Activated naive CD4-positive, alpha-beta T cell treated with anti-CD3 and anti-CD28 coated beads for 36 hours (primary cell): ENCODE measurements at regions of chr19 and their contacts with region 1.

Region 1: DNA sequence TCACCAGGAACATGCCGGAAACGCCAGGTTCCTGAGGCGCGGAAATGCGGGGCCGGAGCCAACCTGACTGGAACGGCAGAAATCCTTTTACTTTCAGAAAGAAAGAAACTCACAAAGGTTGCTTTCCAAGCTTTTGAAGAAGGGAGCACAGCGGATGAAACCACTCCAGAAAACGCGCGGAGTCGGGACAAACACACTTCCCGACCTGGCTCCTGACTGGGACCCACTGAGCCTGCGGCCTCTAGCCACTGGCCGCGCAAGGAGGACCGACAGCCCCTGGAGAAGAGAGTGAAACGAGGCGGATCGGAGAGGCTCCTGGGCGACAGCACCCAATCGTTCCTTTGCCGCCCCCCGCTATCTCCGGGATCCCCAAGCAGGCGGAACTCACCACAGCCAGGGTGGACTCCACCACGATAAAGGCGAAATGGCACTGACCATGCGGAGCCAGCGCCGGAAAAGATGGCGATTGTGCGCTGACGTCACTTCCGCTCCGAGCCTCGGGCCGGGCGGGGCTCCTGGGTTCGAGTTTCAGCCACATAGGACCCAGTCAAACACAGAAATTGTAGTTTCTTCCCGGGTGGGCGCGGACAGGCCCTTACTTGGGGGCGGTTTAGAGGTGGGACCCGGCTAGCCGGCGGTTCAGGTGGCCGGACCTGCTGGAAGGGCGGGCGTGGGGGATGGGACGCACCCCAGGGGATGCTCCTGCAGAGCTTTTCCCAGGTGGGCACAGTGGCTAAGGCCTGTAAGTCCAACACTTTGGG is at the start of gene ZNF121:
- DNase-seq: peak; percentile 88
- H3K4me3 Mint-ChIP-seq: peak within 1 kb of the TSS; percentile 91
- H3K27ac Mint-ChIP-seq: peak within 1 kb of the TSS; percentile 95
- H3K4me1 Mint-ChIP-seq: peaks cover 33% of the 10 kb centered on the region
- H3K27me3 Mint-ChIP-seq: peaks cover 2% of the 10 kb centered on the region
- total RNA-seq, gene ZNF121: 57.1 to 60.1 TPM

Region 2: DNA sequence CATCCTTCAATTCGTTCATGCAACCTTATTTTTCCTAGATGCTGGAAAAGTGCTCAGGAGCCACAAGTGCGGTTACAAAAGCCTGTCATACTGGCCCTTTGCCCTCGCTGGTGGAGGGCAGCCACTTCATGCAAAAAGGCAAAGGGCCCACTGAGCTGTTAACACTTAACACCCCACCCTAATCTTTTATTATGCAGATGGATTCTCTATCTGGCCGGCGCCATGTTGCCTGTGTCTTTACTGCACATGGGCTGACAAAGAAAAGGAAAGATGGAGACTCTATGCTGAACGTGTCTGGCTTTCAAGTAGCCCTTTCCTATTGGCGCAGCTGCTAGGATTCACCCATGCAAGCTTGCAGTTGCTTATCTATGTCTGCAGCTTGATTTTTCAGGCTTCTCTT is 394.7 kb before region 1 on chr19:
- CTCF ChIA-PET with region 1: no interaction called
- intact Hi-C with region 1: no loop called
- DNase-seq: no peak
- H3K4me3 Mint-ChIP-seq: no peak overlapping the region
- H3K27ac Mint-ChIP-seq: no peak overlapping the region
- H3K4me1 Mint-ChIP-seq: no peaks in the 10 kb centered on the region
- H3K27me3 Mint-ChIP-seq: peaks cover 15% of the 10 kb centered on the region

Region 3: GRCh38 chr19:9323919-9324583 is 260.2 kb before region 1 on chr19 and contains the start of gene ZNF559:
- CTCF ChIA-PET with region 1: no interaction called
- intact Hi-C with region 1: loop called (anchors 5 kb)
- DNase-seq: peak; percentile 97
- H3K4me3 Mint-ChIP-seq: peak within 1 kb of the TSS; percentile 90
- H3K27ac Mint-ChIP-seq: peak within 1 kb of the TSS; percentile 93
- H3K4me1 Mint-ChIP-seq: peaks cover 28% of the 10 kb centered on the region
- H3K27me3 Mint-ChIP-seq: no peaks in the 10 kb centered on the region
- total RNA-seq, gene ZNF559: 10.3 to 11.2 TPM

Region 4: GRCh38 chr19:9538183-9539058 is 45.8 kb before region 1 on chr19 and contains the start of gene ZNF426:
- CTCF ChIA-PET with region 1: no interaction called
- intact Hi-C with region 1: loop called (anchors 1 kb)
- DNase-seq: peak; percentile 95
- H3K4me3 Mint-ChIP-seq: peak within 1 kb of the TSS; percentile 98
- H3K27ac Mint-ChIP-seq: peak within 1 kb of the TSS; percentile 96
- H3K4me1 Mint-ChIP-seq: peaks cover 22% of the 10 kb centered on the region
- H3K27me3 Mint-ChIP-seq: no peaks in the 10 kb centered on the region
- total RNA-seq, gene ZNF426: 11.2 to 12.3 TPM

Region 5: DNA sequence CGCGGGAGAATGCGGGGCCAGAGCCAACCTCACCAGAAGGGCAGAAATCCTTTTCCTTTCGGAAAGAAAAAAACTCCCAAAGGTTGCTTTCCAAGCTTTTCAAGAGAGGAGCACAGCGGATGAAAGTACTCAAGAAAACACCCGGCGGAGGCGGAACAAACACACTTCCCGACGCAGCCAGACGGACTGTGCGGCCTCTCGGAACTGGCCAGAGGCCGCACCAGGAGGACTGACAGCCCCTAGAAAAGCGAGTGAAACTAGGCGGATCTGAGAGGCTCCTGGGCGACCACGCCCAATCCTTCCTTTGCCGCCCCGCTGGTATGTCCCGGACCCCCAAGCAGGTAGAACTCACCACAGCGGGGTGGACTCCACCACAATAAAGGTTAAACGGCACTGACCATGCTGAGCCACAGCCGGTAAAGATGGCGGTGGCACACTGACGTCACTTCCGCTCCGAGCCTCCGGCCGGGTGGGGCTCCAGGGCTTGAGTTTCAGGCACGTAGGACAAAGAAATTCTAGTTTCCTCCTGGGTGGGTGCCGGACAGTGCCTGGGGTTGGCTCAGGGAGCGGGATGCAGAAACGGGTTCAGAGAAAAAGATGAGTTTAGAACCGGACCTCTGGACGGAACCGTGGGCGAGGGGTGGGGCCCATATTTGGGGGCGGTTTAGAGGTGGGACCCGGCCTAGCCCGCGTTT is 90.6 kb after region 1 on chr19 and contains the start of gene ZNF562:
- CTCF ChIA-PET with region 1: no interaction called
- intact Hi-C with region 1: loop called (anchors 5 kb)
- DNase-seq: peak; percentile 86
- H3K4me3 Mint-ChIP-seq: peak within 1 kb of the TSS; percentile 90
- H3K27ac Mint-ChIP-seq: peak within 1 kb of the TSS; percentile 98
- H3K4me1 Mint-ChIP-seq: peaks cover 23% of the 10 kb centered on the region
- H3K27me3 Mint-ChIP-seq: no peaks in the 10 kb centered on the region
- total RNA-seq, gene ZNF562: 20.1 to 21.9 TPM

Region 6: GRCh38 chr19:9796113-9796773 is 212.0 kb after region 1 on chr19:
- CTCF ChIA-PET with region 1: interaction called, 6 read pairs
- intact Hi-C with region 1: loop called (anchors 1 kb)
- DNase-seq: peak; percentile 96
- H3K4me3 Mint-ChIP-seq: no peak overlapping the region
- H3K27ac Mint-ChIP-seq: peak overlapping the region; percentile 63
- H3K4me1 Mint-ChIP-seq: peaks cover 12% of the 10 kb centered on the region
- H3K27me3 Mint-ChIP-seq: no peaks in the 10 kb centered on the region

Region 7: DNA sequence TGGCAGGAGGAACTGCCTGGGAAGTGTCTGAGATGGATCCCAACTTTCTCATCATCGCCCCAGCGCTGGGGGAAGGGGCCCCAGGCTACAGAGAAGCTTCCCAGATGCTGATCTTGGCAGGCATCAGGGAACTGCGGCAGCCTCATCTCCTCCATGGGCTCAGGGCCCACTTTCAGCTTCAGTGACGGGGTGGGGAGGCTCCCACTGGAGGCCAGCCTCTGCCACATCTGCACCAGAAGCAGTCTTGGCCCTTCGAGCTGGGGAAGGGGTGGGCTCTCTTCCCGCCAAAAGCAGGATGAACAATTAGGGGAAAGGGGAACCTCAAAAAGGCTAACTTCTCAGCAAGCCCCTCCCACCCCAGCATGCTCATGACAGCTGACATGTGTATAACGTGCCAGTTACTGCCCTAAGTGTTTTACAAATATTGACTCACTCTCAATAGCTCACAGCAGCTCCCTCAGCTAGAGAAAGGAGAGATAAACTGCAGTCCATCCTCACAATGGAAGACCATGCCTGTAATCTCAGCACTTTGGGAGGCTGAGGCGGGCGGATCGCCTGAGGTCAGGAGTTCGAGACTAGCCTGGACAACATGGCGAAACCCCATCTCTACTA is 654.0 kb after region 1 on chr19:
- CTCF ChIA-PET with region 1: no interaction called
- intact Hi-C with region 1: no loop called
- DNase-seq: no peak
- H3K4me3 Mint-ChIP-seq: no peak overlapping the region
- H3K27ac Mint-ChIP-seq: no peak overlapping the region
- H3K4me1 Mint-ChIP-seq: peaks cover 19% of the 10 kb centered on the region
- H3K27me3 Mint-ChIP-seq: no peaks in the 10 kb centered on the region